Sciatic nerve (tissue), 2 donors: ENCODE measurements at regions of chr5 and their contacts with region 1.

Region 1: DNA sequence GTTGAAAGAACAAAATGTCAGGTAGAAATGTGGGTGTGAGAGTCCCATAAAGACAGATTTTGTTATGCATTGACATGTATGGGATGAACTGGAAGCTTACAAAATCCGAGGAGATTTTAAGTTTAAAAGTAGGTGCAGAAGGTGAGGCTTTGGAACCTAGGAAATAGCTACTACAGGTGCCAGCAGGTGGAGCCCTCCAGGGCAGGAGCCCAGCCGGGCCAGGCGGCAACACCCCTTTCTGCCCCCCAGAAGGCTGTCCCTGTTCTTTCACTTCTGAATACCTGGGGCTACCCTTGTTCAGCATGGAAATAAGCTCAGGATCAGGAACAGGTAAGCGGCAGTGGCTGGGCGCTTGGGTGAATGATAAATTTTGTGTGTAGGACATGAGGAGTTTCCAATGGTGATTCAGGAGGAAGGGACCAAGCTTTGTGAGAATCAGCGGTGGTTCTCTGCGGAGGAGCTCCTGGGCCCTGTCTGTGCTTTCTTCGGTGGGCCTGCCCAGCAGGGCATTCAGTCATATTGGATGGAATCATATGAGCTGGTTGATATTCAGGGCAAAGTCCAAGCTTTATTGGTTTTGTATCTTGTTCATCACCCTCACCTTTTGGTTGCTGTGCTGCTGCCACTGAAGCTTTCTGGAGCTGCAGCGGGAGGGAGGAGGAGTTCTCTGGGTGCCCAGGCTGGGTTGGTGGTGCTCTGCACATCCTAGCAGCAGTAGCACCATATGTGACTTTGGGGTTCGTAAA is 12.3 kb downstream of the PCBD2 start:
- DNase-seq: no peak
- ATAC-seq: no peak

Region 2: DNA sequence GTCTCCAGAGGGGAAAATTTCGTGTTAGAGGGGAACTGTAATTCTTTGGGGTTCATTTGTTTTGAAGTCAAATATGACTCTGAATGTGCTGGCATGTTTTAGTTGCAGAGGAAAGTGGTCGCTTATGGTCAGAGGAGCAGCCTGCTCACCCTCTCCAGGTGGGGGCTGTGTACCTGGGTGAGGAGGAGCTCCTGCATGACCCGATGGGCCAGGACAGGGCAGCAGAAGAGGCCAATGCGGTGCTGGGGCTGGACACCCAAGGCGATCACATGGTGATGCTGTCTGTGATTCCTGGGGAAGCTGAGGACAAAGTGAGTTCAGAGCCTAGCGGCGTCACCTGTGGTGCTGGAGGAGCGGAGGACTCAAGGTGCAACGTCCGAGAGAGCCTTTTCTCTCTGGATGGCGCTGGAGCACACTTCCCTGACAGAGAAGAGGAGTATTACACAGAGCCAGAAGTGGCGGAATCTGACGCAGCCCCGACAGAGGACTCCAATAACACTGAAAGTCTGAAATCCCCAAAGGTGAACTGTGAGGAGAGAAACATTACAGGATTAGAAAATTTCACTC is 29.6 kb before region 1 on chr5:
- intact Hi-C with region 1: loop called (anchors 1 kb)
- DNase-seq: no peak
- ATAC-seq: no peak